WTC11 (cell line): ENCODE measurements at regions of chr2 and their contacts with region 1.

Region 1: DNA sequence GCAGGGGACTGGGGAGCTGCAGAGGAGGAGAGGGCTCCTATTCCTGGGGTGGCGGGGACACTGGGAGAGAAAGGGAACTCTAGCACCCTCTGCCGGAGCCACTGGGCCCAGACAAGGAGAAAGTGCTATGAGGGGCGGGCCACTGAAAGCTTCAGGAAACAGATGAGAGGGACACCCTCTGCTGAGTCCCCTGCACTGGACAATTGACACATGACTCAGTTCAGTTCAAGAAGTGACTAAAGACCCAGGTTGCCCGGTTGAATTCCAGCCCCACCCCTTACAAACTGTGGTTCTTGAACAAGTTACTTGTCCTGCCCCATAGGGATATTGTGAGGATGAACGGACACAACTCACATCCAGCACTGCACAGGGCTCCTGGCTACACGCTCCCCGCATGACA is 5.0 kb downstream of the RUFY4 start:
- DNase-seq: peak; percentile 77
- ATAC-seq: peak; percentile 85
- H3K4me3 Mint-ChIP-seq: no peak overlapping the region
- H3K27ac Mint-ChIP-seq: no peak overlapping the region
- H3K4me1 Mint-ChIP-seq: peaks cover 14% of the 10 kb centered on the region
- H3K27me3 Mint-ChIP-seq: no peaks in the 10 kb centered on the region; the same call in 1 of the 2 replicates
- CTCF ChIP-seq: peak; percentile 32; the same call in 1 of the 2 replicates

Region 2: DNA sequence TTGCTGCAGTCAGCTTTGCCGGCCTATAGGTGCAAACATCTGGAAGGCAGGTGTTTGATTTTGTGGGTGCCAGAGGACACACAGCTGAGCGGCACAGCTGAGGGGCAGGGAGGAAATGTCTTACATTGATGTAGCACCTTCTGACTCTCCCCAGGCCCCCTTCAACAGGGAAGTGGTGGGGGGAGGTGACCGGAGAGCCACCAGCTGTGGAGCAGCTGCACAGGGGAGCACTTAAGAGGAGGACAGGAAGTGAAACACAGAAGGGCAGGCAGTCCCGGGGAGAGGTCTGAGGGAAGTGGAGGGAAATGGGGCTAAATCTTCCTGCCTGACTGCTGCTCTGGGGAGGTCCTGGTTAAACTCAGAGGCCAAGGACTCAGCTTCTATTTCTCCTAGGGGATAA is 480.3 kb before region 1 on chr2:
- CTCF ChIA-PET with region 1: no interaction called
- POLR2A ChIA-PET with region 1: no interaction called
- DNase-seq: no peak
- ATAC-seq: peak; percentile 75
- H3K4me3 Mint-ChIP-seq: no peak overlapping the region
- H3K27ac Mint-ChIP-seq: no peak overlapping the region
- H3K4me1 Mint-ChIP-seq: peaks cover 40% of the 10 kb centered on the region
- H3K27me3 Mint-ChIP-seq: peaks cover 3% of the 10 kb centered on the region; the same call in 1 of the 2 replicates
- CTCF ChIP-seq: no peak

Region 3: GRCh38 chr2:218026676-218027425 is 47.2 kb before region 1 on chr2:
- CTCF ChIA-PET with region 1: interaction called, 10 read pairs
- POLR2A ChIA-PET with region 1: no interaction called
- DNase-seq: peak; percentile 8
- ATAC-seq: no peak
- H3K4me3 Mint-ChIP-seq: no peak overlapping the region
- H3K27ac Mint-ChIP-seq: no peak overlapping the region
- H3K4me1 Mint-ChIP-seq: peaks cover 17% of the 10 kb centered on the region
- H3K27me3 Mint-ChIP-seq: peaks cover 2% of the 10 kb centered on the region; the same call in 1 of the 2 replicates
- CTCF ChIP-seq: no peak

Region 4: DNA sequence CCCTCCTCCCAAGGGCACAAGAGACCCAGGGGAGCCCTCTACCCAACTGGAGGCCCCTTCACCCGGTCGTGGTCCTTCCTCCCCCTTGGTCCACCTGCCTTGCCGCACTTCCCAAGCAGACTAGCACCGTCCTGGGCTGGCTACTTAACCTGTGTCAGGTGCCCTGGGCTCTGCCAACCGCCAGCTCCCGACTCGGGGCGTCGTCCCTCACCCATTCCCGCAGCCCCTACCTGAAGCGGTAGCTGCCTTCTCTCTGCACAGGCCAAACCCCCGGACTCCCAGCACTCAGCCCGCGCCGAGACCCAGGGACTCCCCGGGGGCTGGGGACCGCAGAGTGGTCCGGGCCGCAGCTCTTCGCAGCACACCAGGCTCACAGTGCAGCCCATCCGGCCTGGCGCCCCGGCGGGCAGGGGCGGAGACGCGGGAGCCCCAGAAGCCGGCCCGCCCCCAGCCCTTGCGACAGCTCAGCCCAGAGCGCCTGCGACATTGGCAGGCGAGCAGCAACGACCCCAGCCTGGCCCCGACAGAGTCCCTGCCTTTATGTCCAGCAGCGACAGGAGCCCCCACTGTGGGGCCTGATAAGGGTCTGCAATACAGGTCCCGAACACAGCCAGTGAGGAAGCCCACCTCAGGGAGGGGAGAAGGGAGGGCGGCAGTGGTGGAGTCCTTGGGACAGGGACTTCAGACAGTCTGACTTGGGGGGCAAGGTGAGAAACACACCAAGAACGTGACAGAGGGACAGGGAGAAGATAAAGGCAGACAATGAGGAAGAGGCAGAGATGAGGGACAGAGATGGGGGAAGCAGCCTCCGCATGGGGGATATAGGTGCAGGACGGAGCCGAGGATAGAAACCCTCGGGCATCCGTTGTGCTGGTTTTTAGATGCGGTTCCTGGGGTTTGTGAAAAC is 40.2 kb before region 1 on chr2:
- CTCF ChIA-PET with region 1: interaction called, 24 read pairs
- POLR2A ChIA-PET with region 1: no interaction called
- DNase-seq: peak; percentile 54
- ATAC-seq: peak; percentile 46
- H3K4me3 Mint-ChIP-seq: peak overlapping the region; percentile 68
- H3K27ac Mint-ChIP-seq: no peak overlapping the region
- H3K4me1 Mint-ChIP-seq: peaks cover 2% of the 10 kb centered on the region; the same call in 1 of the 2 replicates
- H3K27me3 Mint-ChIP-seq: peaks cover 30% of the 10 kb centered on the region
- CTCF ChIP-seq: no peak

Region 5: DNA sequence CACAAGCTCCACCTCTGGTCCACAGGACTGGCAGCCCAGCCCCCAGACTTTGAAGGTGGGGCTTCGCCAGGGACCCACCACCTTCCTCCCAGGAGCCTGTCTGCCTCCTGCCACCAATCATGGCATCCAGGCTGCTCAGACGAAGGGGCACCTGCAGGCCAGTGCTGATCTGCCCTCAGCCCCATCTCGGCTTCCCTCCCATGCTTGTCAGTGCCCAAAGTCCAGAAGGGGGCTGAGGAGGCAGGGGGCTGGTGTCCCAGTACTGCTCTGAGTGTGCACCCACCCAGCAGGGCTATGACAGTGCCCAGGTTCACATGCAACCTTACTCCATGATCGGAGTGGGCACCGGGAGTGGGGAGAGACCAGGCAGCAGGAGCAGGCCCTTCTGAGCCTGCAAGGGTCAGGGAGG is 30.3 kb before region 1 on chr2:
- CTCF ChIA-PET with region 1: interaction called, 12 read pairs
- POLR2A ChIA-PET with region 1: no interaction called
- DNase-seq: no peak
- ATAC-seq: no peak
- H3K4me3 Mint-ChIP-seq: no peak overlapping the region
- H3K27ac Mint-ChIP-seq: no peak overlapping the region
- H3K4me1 Mint-ChIP-seq: no peaks in the 10 kb centered on the region
- H3K27me3 Mint-ChIP-seq: peaks cover 10% of the 10 kb centered on the region
- CTCF ChIP-seq: no peak

Region 6: GRCh38 chr2:218060118-218060517 is 13.9 kb before region 1 on chr2:
- CTCF ChIA-PET with region 1: interaction called, 12 read pairs
- POLR2A ChIA-PET with region 1: no interaction called
- DNase-seq: no peak
- ATAC-seq: no peak
- H3K4me3 Mint-ChIP-seq: no peak overlapping the region
- H3K27ac Mint-ChIP-seq: no peak overlapping the region
- H3K4me1 Mint-ChIP-seq: peaks cover 3% of the 10 kb centered on the region
- H3K27me3 Mint-ChIP-seq: peaks cover 14% of the 10 kb centered on the region; the same call in 1 of the 2 replicates
- CTCF ChIP-seq: no peak

Region 7: GRCh38 chr2:218093879-218094278 is 19.8 kb after region 1 on chr2:
- CTCF ChIA-PET with region 1: interaction called, 10 read pairs
- POLR2A ChIA-PET with region 1: no interaction called
- DNase-seq: no peak
- ATAC-seq: peak; percentile 30; the same call in 1 of the 2 replicates
- H3K4me3 Mint-ChIP-seq: no peak overlapping the region
- H3K27ac Mint-ChIP-seq: no peak overlapping the region
- H3K4me1 Mint-ChIP-seq: no peaks in the 10 kb centered on the region
- H3K27me3 Mint-ChIP-seq: peaks cover 12% of the 10 kb centered on the region
- CTCF ChIP-seq: 0 out of 2 replicates have a peak, but pooled peaks have one; percentile 14